ENCODE measurements at regions of chrX and their contacts with region 1.

Region 1: GRCh38 chrX:107741404-107741790 is 34.2 kb downstream of the TSC22D3 start:
- DNase-seq: peak in 1 of 9 experiments; percentile 22
- ATAC-seq: peak; percentile 6
- H3K4me3 ChIP-seq: peak overlapping the region; percentile 29
- H3K4me3 Mint-ChIP-seq: peak overlapping the region; percentile 80
- H3K27ac ChIP-seq: peak overlapping the region; percentile 68 to 73
- H3K27ac Mint-ChIP-seq: peak overlapping the region; percentile 97
- H3K4me1 ChIP-seq: peaks cover 48% of the 10 kb centered on the region
- H3K4me1 Mint-ChIP-seq: peaks cover 44% of the 10 kb centered on the region
- H3K27me3 ChIP-seq: no peaks in the 10 kb centered on the region
- H3K27me3 Mint-ChIP-seq: no peaks in the 10 kb centered on the region
- CTCF ChIP-seq: no peak

Region 2: GRCh38 chrX:107710617-107711391 is 30.6 kb before region 1 on chrX:
- CTCF ChIA-PET with region 1: interaction called, 23 read pairs
- POLR2A ChIA-PET with region 1: interaction called, 42 read pairs
- intact Hi-C with region 1: no loop called
- DNase-seq: peak in 8 of 9 experiments; percentile 21 to 93 (median 66)
- ATAC-seq: peak; percentile 50
- H3K4me3 ChIP-seq: no peak overlapping the region
- H3K4me3 Mint-ChIP-seq: peak overlapping the region; percentile 71
- H3K27ac ChIP-seq: peak overlapping the region; percentile 100
- H3K27ac Mint-ChIP-seq: peak overlapping the region; percentile 99
- H3K4me1 ChIP-seq: peaks cover 48% of the 10 kb centered on the region
- H3K4me1 Mint-ChIP-seq: peaks cover 62% of the 10 kb centered on the region
- H3K27me3 ChIP-seq: no peaks in the 10 kb centered on the region
- H3K27me3 Mint-ChIP-seq: no peaks in the 10 kb centered on the region
- CTCF ChIP-seq: no peak

Region 3: GRCh38 chrX:108122748-108123147 is 381.4 kb after region 1 on chrX:
- CTCF ChIA-PET with region 1: no interaction called
- POLR2A ChIA-PET with region 1: no interaction called
- intact Hi-C with region 1: no loop called
- DNase-seq: no peak
- ATAC-seq: no peak
- H3K4me3 ChIP-seq: no peak overlapping the region
- H3K4me3 Mint-ChIP-seq: no peak overlapping the region
- H3K27ac ChIP-seq: no peak overlapping the region
- H3K27ac Mint-ChIP-seq: no peak overlapping the region
- H3K4me1 ChIP-seq: no peaks in the 10 kb centered on the region
- H3K4me1 Mint-ChIP-seq: no peaks in the 10 kb centered on the region
- H3K27me3 ChIP-seq: no peaks in the 10 kb centered on the region
- H3K27me3 Mint-ChIP-seq: no peaks in the 10 kb centered on the region
- CTCF ChIP-seq: no peak

Measured in CD8-positive, alpha-beta T cell (primary cell).